Naive thymus-derived CD4-positive, alpha-beta T cell (primary cell): ENCODE measurements at regions of chr1 and their contacts with region 1.

Region 1: DNA sequence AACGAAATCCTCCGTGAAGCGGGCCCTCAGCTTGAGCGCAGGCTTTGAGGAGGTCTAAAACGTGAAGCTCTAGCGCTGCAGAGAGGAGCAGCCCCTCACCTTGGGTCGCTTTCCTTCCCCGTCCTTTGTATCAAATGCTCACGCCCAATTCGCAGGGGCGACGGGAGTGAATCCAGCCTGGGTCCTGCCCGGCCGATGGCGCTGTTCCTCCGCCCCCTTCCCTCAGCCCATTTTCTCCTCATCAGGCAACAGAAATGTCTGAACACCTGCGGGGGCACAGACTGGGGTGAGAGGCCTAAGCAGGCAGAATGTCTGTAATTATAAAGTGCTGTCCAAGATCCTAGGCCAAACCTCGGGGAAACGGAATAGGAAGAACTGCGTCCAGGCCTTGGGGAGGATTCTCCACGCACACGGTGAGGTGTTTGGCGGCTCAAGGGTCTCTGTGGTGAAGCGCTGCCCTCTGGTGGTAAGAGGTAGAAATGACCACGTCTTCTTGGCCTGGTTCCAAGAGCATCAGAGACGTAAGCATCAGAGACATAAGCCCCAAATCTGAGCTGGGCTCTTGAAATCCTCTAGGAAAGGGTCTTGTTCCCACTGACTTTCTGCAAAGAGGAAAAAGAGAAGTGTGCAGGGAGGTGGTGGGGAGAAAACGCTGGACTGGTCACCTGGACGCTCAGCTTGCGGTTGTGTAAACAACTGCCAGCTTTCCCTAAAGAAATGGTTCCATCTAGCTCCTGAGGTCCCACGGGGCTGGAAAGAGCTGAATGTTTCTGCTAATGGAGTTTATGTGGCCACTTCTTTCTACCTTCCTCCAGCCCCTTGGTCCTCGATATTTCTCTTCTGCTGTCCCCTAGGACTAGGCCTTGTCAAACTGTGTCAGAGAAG is 92.1 kb upstream of the CD53 start:
- DNase-seq: peak; percentile 48 to 83 (median 74)
- ATAC-seq: peak; percentile 88
- H3K4me3 ChIP-seq: no peak overlapping the region
- H3K4me3 Mint-ChIP-seq: peak overlapping the region in 5 of 10 donors; percentile 29 to 61 (median 42)
- H3K27ac ChIP-seq: no peak overlapping the region
- H3K27ac Mint-ChIP-seq: peak overlapping the region in 5 of 9 donors; percentile 2 to 82 (median 34)
- H3K4me1 ChIP-seq: peaks cover 31 to 40% of the 10 kb centered on the region in 2 donors
- H3K4me1 Mint-ChIP-seq: peaks cover 18 to 54% (median 45%) of the 10 kb centered on the region in 7 donors
- H3K27me3 ChIP-seq: no peaks in the 10 kb centered on the region
- H3K27me3 Mint-ChIP-seq: peaks cover 0 to 28% (median 0%) of the 10 kb centered on the region in 5 donors

Region 2: GRCh38 chr1:110412576-110412975 is 368.3 kb before region 1 on chr1:
- CTCF ChIA-PET with region 1: no interaction called
- POLR2A ChIA-PET with region 1: no interaction called
- intact Hi-C with region 1: loop called (anchors 2 to 5 kb)
- DNase-seq: peak; percentile 22 to 59 (median 51)
- ATAC-seq: peak; percentile 71
- H3K4me3 ChIP-seq: no peak overlapping the region
- H3K4me3 Mint-ChIP-seq: no peak overlapping the region
- H3K27ac ChIP-seq: no peak overlapping the region
- H3K27ac Mint-ChIP-seq: peak overlapping the region in 2 of 9 donors; percentile 15 to 77
- H3K4me1 ChIP-seq: peaks cover 7 to 13% of the 10 kb centered on the region in 2 donors
- H3K4me1 Mint-ChIP-seq: peaks cover 9 to 22% (median 18%) of the 10 kb centered on the region in 7 donors
- H3K27me3 ChIP-seq: no peaks in the 10 kb centered on the region
- H3K27me3 Mint-ChIP-seq: no peaks in the 10 kb centered on the region

Region 3: GRCh38 chr1:110554871-110555801 is 225.7 kb before region 1 on chr1:
- CTCF ChIA-PET with region 1: interaction called, 21 read pairs
- POLR2A ChIA-PET with region 1: no interaction called
- intact Hi-C with region 1: loop called (anchors 1 kb)
- DNase-seq: peak; percentile 20 to 71 (median 54)
- ATAC-seq: peak; percentile 89
- H3K4me3 ChIP-seq: peak overlapping the region; percentile 25
- H3K4me3 Mint-ChIP-seq: peak overlapping the region in 9 of 10 donors; percentile 13 to 63 (median 31)
- H3K27ac ChIP-seq: no peak overlapping the region
- H3K27ac Mint-ChIP-seq: no peak overlapping the region
- H3K4me1 ChIP-seq: no peaks in the 10 kb centered on the region
- H3K4me1 Mint-ChIP-seq: peaks cover 0 to 8% (median 0%) of the 10 kb centered on the region in 7 donors
- H3K27me3 ChIP-seq: peaks cover 0 to 9% of the 10 kb centered on the region in 2 donors
- H3K27me3 Mint-ChIP-seq: peaks cover 47 to 72% (median 60%) of the 10 kb centered on the region in 5 donors

Region 4: DNA sequence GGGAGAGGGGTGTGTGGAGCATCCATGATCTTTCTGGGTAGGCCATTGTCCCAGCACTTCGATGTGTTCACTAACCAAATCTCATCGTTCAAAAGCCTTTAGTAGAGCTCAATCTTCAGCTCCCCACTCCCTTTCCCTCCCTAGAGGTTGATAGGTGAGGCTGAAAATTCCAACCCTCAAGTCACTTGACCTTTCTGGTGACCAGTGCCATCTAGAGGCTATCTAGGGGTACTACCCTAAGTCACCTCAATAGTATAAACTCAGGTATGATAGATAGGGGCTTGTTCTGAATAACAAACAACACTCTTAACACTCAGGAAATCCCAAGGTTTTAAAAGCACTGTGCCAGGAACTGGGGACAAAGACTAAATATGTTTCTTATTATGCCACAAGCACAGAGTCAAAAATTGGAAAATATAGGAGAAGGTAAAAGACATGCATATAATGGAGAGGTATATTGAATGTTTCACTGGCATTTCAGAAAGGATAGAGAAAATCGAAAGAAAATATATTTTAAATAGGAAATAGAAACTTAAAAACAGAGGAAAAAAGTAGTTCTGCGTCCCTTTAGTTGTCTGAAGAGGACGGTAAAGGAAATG is 49.2 kb after region 1 on chr1:
- CTCF ChIA-PET with region 1: interaction called, 37 read pairs
- POLR2A ChIA-PET with region 1: interaction called, 3 read pairs
- intact Hi-C with region 1: loop called (anchors 1 kb)
- DNase-seq: peak in 7 of 9 donors; percentile 20 to 61 (median 54)
- ATAC-seq: peak; percentile 93
- H3K4me3 ChIP-seq: no peak overlapping the region
- H3K4me3 Mint-ChIP-seq: no peak overlapping the region
- H3K27ac ChIP-seq: no peak overlapping the region
- H3K27ac Mint-ChIP-seq: peak overlapping the region in 1 of 9 donors; percentile 14
- H3K4me1 ChIP-seq: no peaks in the 10 kb centered on the region
- H3K4me1 Mint-ChIP-seq: peaks cover 6 to 33% (median 13%) of the 10 kb centered on the region in 7 donors
- H3K27me3 ChIP-seq: no peaks in the 10 kb centered on the region
- H3K27me3 Mint-ChIP-seq: peaks cover 0 to 49% (median 2%) of the 10 kb centered on the region in 5 donors

Region 5: DNA sequence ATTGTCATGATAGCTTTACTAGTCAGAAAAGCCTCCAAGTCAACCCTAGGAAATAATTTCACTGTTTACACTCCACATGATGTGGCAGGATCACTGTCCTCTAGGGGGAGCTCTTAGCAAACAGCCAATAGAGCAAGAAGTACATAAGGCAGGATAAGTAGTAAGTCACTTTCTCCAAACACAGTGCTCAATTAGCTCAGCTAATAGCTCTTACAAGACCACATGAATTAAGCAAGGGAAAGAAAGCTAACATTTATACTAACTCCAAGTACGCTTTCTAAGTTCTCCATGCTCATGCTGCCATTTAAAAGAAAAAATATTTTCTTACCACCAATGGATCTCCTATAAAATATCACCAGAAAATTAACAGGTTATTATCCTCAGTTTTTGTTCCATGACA is 249.7 kb after region 1 on chr1:
- CTCF ChIA-PET with region 1: interaction called, 7 read pairs
- POLR2A ChIA-PET with region 1: no interaction called
- intact Hi-C with region 1: loop called in 1 of 2 experiments (anchors 5 kb)
- DNase-seq: peak in 8 of 9 donors; percentile 20 to 69 (median 56)
- ATAC-seq: peak; percentile 66
- H3K4me3 ChIP-seq: no peak overlapping the region
- H3K4me3 Mint-ChIP-seq: no peak overlapping the region
- H3K27ac ChIP-seq: no peak overlapping the region
- H3K27ac Mint-ChIP-seq: peak overlapping the region in 2 of 9 donors; percentile 3 to 22
- H3K4me1 ChIP-seq: no peaks in the 10 kb centered on the region
- H3K4me1 Mint-ChIP-seq: peaks cover 0 to 5% (median 0%) of the 10 kb centered on the region in 7 donors
- H3K27me3 ChIP-seq: no peaks in the 10 kb centered on the region
- H3K27me3 Mint-ChIP-seq: peaks cover 0 to 28% (median 13%) of the 10 kb centered on the region in 5 donors